ENCODE measurements at regions of chr3 and their contacts with region 1.

Region 1: GRCh38 chr3:69770219-69770618 is 31.0 kb downstream of the MITF start:
- DNase-seq: peak; percentile 75
- H3K4me3 ChIP-seq: no peak overlapping the region
- H3K27ac ChIP-seq: peak overlapping the region; percentile 73
- H3K4me1 ChIP-seq: peaks cover 44% of the 10 kb centered on the region
- H3K27me3 ChIP-seq: no peaks in the 10 kb centered on the region
- CTCF ChIP-seq: no peak

Region 2: DNA sequence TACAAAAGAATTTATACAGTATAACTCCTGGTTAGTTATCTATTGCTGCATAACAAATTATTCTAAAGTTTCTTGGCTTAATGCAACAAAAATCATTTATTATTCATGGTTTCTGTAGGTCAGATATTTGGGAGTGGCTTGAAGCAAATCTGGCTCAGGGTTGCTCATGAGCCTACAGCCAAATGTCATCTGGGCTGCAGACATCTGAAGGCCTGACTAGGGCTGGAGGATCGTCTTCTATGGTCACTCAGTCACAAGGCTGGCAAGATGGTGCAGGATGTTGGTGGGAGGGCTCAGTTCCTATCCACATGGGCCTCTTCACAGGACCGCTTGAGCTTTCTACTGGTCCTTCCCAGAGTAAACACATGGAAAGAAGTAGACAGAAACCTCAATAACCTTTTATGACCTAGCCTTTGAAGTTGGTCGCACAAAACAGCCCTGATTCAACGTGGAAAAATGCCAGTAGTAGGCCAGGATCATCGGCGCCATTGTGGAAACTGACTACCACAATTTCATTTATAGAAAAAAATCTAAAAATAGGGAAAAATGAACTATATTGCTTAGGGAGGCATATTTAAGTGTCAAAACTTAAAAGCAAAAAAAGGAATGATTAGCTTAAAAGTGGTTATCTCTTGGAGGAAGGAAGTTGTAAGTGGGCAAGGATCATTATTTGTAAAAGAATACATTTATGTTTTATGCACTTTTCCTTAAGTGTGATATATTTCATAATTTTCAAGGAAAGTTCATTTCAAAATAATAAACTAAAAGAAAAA is 40.9 kb before region 1 on chr3:
- CTCF ChIA-PET with region 1: no interaction called
- dilution Hi-C with region 1: no loop called
- in situ Hi-C with region 1: no loop called
- intact Hi-C with region 1: no loop called
- DNase-seq: no peak
- H3K4me3 ChIP-seq: no peak overlapping the region
- H3K27ac ChIP-seq: no peak overlapping the region
- H3K4me1 ChIP-seq: peaks cover 4% of the 10 kb centered on the region
- H3K27me3 ChIP-seq: no peaks in the 10 kb centered on the region
- CTCF ChIP-seq: no peak

Region 3: DNA sequence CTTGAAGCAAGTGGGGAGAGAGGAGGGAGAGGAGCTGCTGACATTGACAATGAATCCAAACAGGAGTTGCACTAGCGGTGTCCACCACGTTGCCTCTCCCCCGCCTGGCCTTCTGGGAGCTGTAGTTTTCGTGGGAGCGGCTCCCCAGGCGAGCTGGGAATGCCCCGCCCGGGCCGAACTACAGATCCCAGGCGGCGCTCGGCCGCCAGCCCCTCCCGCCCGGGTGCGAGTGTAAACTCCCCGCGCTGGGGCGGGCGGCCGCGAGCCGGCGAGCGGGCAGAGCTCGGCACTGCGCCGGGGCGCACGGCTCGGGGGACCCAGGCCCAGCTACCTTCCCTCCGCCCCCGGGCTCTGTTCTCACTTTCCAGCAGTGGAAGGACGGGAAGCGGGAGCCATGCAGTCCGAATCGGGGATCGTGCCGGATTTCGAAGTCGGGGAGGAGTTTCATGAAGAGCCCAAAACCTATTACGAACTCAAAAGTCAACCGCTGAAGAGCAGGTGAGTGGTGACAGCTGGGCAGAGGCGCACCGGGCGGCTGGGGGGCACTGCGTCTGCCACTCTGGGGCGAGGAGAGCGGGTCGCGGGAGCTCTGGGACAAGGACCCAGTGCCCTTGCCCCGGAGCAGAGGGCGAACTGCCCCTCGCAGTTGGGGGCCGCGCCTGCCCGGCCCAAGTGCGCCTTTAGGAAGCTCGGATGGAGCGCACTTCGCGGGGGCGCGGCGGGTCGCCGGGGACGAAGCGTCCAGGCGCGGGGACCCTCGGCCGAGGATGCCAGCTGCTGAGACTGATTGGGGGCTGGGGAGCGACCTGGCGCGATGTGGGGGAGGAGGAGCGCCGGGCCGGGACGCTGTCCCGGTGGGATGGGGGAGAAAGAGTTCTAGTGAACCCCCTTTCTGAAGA is 30.8 kb before region 1 on chr3 and contains the start of gene MITF:
- CTCF ChIA-PET with region 1: no interaction called
- dilution Hi-C with region 1: no loop called
- in situ Hi-C with region 1: no loop called
- intact Hi-C with region 1: loop called (anchors 1 kb)
- DNase-seq: peak; percentile 90
- H3K4me3 ChIP-seq: peak within 1 kb of the TSS; percentile 85 to 98 (median 85)
- H3K27ac ChIP-seq: no peak within 1 kb of the TSS
- H3K4me1 ChIP-seq: peaks cover 10% of the 10 kb centered on the region
- H3K27me3 ChIP-seq: no peaks in the 10 kb centered on the region
- CTCF ChIP-seq: peak in 1 of 2 donors; percentile 0
- total RNA-seq, gene MITF: 5.7 to 8.3 TPM

Region 4: GRCh38 chr3:69914395-69914794 is 144.2 kb after region 1 on chr3:
- CTCF ChIA-PET with region 1: no interaction called
- dilution Hi-C with region 1: no loop called
- in situ Hi-C with region 1: no loop called
- intact Hi-C with region 1: no loop called
- DNase-seq: peak; percentile 91
- H3K4me3 ChIP-seq: no peak overlapping the region
- H3K27ac ChIP-seq: no peak overlapping the region
- H3K4me1 ChIP-seq: no peaks in the 10 kb centered on the region
- H3K27me3 ChIP-seq: no peaks in the 10 kb centered on the region
- CTCF ChIP-seq: no peak